ENCODE measurements at regions of chr6 and their contacts with region 1.

Region 1: DNA sequence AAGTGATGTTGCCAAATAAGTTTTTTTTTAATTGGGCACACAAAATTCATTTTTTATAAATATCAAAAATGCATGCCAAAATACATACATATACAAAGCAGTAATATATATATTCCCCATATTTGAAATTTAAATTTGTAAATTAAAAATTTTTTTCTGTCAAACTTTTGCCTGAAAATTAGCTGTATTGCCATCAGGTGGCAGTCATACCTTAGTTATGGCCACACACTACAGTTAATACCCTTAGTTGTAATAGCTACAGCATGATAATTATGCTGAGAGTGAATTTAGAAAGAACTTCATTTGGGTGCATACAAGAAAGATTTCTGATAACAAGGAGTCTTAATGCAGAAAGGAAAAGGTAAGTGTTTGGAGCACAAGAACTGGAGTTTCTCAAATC is 46.2 kb upstream of the SDHAF4 start:
- DNase-seq: peak; percentile 13
- H3K4me3 Mint-ChIP-seq: no peak overlapping the region
- H3K27ac Mint-ChIP-seq: no peak overlapping the region
- H3K4me1 Mint-ChIP-seq: no peaks in the 10 kb centered on the region
- H3K27me3 Mint-ChIP-seq: no peaks in the 10 kb centered on the region
- CTCF ChIP-seq: peak; percentile 46

Region 2: GRCh38 chr6:70673601-70674000 is 153.0 kb after region 1 on chr6:
- CTCF ChIA-PET with region 1: interaction called, 10 read pairs
- POLR2A ChIA-PET with region 1: no interaction called
- intact Hi-C with region 1: no loop called
- DNase-seq: no peak
- H3K4me3 Mint-ChIP-seq: no peak overlapping the region
- H3K27ac Mint-ChIP-seq: no peak overlapping the region
- H3K4me1 Mint-ChIP-seq: peaks cover 37% of the 10 kb centered on the region
- H3K27me3 Mint-ChIP-seq: no peaks in the 10 kb centered on the region
- CTCF ChIP-seq: no peak

Region 3: GRCh38 chr6:70955441-70956190 is 435.0 kb after region 1 on chr6:
- CTCF ChIA-PET with region 1: interaction called, 9 read pairs
- POLR2A ChIA-PET with region 1: no interaction called
- intact Hi-C with region 1: loop called (anchors 10 kb)
- DNase-seq: peak; percentile 79
- H3K4me3 Mint-ChIP-seq: peak overlapping the region; percentile 67
- H3K27ac Mint-ChIP-seq: no peak overlapping the region
- H3K4me1 Mint-ChIP-seq: no peaks in the 10 kb centered on the region
- H3K27me3 Mint-ChIP-seq: peaks cover 96% of the 10 kb centered on the region
- CTCF ChIP-seq: peak; percentile 86

Measured in MCF 10A (cell line).